B cell (primary cell): ENCODE measurements at regions of chr7 and their contacts with region 1.

Region 1: GRCh38 chr7:43582503-43583423 is at the start of gene STK17A:
- DNase-seq: peak; percentile 97
- ATAC-seq: peak; percentile 83
- H3K4me3 ChIP-seq: peak within 1 kb of the TSS; percentile 89 to 98 (median 91)
- H3K4me3 Mint-ChIP-seq: peak within 1 kb of the TSS; percentile 98
- H3K27ac ChIP-seq: peak within 1 kb of the TSS; percentile 86 to 94
- H3K27ac Mint-ChIP-seq: peak within 1 kb of the TSS; percentile 98
- H3K4me1 ChIP-seq: peaks cover 14 to 23% of the 10 kb centered on the region in 2 donors
- H3K4me1 Mint-ChIP-seq: peaks cover 35% of the 10 kb centered on the region
- H3K27me3 ChIP-seq: peaks cover 0 to 2% (median 0%) of the 10 kb centered on the region in 4 experiments
- H3K27me3 Mint-ChIP-seq: no peaks in the 10 kb centered on the region
- CTCF ChIP-seq: peak; percentile 96
- total RNA-seq, gene STK17A: 111 and 115 TPM in 2 replicates

Region 2: DNA sequence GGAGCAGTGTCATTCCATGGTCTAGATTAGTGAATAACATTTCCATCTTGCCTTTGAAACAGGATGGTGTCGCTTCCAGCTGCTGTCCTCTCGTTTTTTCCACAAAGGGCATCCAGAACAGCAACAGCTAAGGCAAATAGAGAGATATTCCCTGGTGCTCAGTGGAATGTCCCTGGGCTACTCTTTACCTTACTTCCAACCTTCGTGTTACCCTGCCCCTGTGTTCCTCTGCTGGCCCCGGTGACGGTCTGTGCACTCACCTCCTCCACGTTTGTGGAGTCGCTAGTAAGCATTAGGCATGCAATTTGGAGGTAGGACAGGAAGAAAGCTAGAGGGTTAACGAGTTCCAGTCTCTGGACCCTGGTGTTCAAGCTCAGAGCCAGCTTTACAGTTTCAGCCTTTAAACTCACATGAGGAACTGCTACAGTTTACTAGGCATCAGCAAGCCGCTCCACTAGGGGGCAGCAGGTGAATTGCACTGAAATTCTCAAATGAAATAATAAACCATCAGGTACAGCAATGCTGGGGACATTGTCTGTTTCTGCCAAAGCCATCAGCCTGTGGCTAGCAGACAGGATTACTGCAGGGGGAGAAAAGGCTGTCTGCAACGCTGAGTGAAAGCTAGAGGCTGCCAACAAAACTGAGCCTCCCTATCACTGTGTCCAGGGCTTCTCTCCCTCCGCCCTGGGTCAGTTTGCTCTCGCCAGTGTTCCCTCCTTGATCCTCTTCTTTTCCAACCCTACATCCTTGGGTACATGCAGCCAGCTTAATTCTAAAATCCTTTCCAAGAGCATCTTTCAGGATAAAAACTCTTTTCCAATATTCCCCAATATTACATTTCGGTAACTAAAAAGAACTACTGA is 641.5 kb before region 1 on chr7:
- CTCF ChIA-PET with region 1: interaction called, 10 read pairs
- POLR2A ChIA-PET with region 1: no interaction called
- intact Hi-C with region 1: loop called (anchors 1 kb)
- DNase-seq: peak; percentile 74
- ATAC-seq: peak; percentile 53
- H3K4me3 ChIP-seq: no peak overlapping the region
- H3K4me3 Mint-ChIP-seq: no peak overlapping the region
- H3K27ac ChIP-seq: no peak overlapping the region
- H3K27ac Mint-ChIP-seq: no peak overlapping the region
- H3K4me1 ChIP-seq: no peaks in the 10 kb centered on the region
- H3K4me1 Mint-ChIP-seq: peaks cover 6% of the 10 kb centered on the region
- H3K27me3 ChIP-seq: no peaks in the 10 kb centered on the region
- H3K27me3 Mint-ChIP-seq: no peaks in the 10 kb centered on the region
- CTCF ChIP-seq: peak; percentile 91

Region 3: GRCh38 chr7:43362652-43363034 is 220.1 kb before region 1 on chr7:
- CTCF ChIA-PET with region 1: no interaction called
- POLR2A ChIA-PET with region 1: no interaction called
- intact Hi-C with region 1: no loop called
- DNase-seq: no peak
- ATAC-seq: no peak
- H3K4me3 ChIP-seq: no peak overlapping the region
- H3K4me3 Mint-ChIP-seq: no peak overlapping the region
- H3K27ac ChIP-seq: no peak overlapping the region
- H3K27ac Mint-ChIP-seq: no peak overlapping the region
- H3K4me1 ChIP-seq: no peaks in the 10 kb centered on the region
- H3K4me1 Mint-ChIP-seq: no peaks in the 10 kb centered on the region
- H3K27me3 ChIP-seq: peaks cover 0 to 3% (median 2%) of the 10 kb centered on the region in 4 experiments
- H3K27me3 Mint-ChIP-seq: peaks cover 8% of the 10 kb centered on the region
- CTCF ChIP-seq: no peak

Region 4: DNA sequence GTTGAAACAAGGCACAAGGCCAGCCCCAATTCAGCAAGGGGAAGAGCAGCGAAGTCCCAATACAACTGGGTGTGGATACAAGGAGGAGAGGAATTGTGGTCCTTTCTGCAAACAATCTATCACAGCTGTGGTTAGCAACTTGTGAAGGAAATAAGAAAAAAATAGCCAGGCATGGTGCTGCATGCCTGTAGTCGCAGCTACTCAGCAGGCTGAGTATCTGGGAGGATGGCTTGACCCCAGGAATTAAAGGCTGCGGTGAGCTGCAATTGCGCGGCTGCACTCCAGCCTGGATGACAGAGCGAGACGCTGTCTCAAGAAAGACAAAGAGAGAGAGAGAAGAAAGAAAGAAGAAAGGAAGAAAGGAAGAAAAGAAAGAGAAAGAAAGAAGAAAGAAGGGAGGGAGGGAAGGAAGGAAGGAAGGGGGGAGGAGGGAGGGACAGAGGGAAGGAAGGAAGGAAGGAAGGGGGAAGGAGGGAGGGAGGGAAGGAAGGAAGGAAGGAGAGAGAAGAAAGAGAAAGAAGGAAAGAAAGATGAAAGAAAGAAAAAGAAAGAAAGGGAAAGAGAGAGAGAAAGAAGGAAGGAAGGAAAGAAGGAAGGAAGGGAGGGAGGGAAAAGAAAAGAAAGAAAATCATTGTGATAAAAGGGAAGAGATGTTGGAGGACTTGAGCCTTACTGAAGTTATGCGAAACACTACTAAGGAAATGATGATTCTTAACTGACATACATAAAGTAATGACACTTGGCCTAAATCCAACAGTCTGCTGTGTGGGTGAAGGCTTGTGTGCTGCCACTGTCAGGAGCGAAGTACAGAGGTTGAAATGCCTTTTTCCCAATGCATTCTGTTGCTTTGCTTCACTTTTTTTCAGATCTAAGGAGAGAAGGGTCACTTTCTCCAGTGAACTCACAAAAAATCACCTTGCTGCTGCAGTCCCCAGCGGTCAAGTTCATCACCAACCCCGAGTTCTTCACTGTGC is 116.9 kb before region 1 on chr7:
- CTCF ChIA-PET with region 1: no interaction called
- POLR2A ChIA-PET with region 1: no interaction called
- intact Hi-C with region 1: no loop called
- DNase-seq: no peak
- ATAC-seq: no peak
- H3K4me3 ChIP-seq: no peak overlapping the region
- H3K4me3 Mint-ChIP-seq: no peak overlapping the region
- H3K27ac ChIP-seq: no peak overlapping the region
- H3K27ac Mint-ChIP-seq: no peak overlapping the region
- H3K4me1 ChIP-seq: no peaks in the 10 kb centered on the region
- H3K4me1 Mint-ChIP-seq: no peaks in the 10 kb centered on the region
- H3K27me3 ChIP-seq: peaks cover 0 to 6% (median 0%) of the 10 kb centered on the region in 4 experiments
- H3K27me3 Mint-ChIP-seq: peaks cover 32% of the 10 kb centered on the region
- CTCF ChIP-seq: no peak

Region 5: DNA sequence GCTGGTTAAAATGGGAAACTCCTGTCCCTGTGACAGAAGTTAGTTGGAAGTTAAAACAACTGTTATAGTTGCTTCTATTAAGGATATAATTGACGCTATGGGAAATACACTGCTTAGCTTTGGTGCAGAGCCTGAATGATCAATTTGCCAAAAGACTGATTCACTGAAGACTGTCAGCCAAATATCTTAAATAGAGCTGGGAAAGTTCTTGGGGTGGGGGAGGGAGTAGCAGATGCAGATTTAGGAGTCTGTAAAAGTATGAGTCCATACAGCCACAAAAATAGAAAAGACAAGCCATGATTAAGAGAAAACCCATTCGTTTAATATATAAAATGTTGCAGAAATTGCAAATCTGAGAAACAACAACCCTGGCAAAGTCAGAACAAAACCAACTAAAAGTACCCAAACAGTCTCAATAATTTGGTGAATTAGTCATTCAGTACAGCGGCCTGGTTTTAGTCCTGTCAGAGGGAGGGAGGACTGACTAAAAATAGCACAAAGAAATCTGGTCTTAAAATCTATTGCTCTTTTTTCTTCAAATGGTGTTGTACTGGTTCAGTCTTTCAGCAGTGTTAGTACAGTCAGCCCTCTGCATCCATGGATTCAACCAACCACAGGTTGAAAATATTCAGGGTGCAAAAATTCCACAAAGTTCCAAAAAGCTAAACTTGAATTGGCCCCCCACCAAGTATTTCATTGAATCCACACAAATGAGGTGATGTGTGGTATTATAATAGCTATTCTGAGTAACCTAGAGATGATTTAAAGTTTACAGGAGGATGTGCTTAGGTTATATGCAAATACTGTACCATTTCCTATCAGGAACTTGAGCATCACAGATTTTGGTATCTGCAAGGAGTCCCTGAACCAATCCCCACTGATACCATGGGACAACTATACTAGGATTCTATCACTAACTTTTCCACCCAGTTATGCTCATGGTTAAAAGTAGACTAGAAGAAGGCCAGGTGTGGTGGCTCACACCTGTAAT is 30.1 kb after region 1 on chr7:
- CTCF ChIA-PET with region 1: interaction called, 27 read pairs
- POLR2A ChIA-PET with region 1: interaction called, 7 read pairs
- intact Hi-C with region 1: no loop called
- DNase-seq: no peak
- ATAC-seq: no peak
- H3K4me3 ChIP-seq: peak overlapping the region in 1 of 5 experiments; percentile 2
- H3K4me3 Mint-ChIP-seq: peak overlapping the region; percentile 38
- H3K27ac ChIP-seq: peak overlapping the region in 1 of 2 donors; percentile 75
- H3K27ac Mint-ChIP-seq: peak overlapping the region; percentile 57
- H3K4me1 ChIP-seq: peaks cover 45 to 51% of the 10 kb centered on the region in 2 donors
- H3K4me1 Mint-ChIP-seq: peaks cover 50% of the 10 kb centered on the region
- H3K27me3 ChIP-seq: no peaks in the 10 kb centered on the region
- H3K27me3 Mint-ChIP-seq: no peaks in the 10 kb centered on the region
- CTCF ChIP-seq: no peak

Region 6: GRCh38 chr7:43639858-43640491 is 57.2 kb after region 1 on chr7:
- CTCF ChIA-PET with region 1: interaction called, 203 read pairs
- POLR2A ChIA-PET with region 1: interaction called, 4 read pairs
- intact Hi-C with region 1: no loop called
- DNase-seq: no peak
- ATAC-seq: no peak
- H3K4me3 ChIP-seq: no peak overlapping the region
- H3K4me3 Mint-ChIP-seq: no peak overlapping the region
- H3K27ac ChIP-seq: peak overlapping the region; percentile 30 to 97
- H3K27ac Mint-ChIP-seq: peak overlapping the region; percentile 8
- H3K4me1 ChIP-seq: peaks cover 42 to 46% of the 10 kb centered on the region in 2 donors
- H3K4me1 Mint-ChIP-seq: peaks cover 70% of the 10 kb centered on the region
- H3K27me3 ChIP-seq: no peaks in the 10 kb centered on the region
- H3K27me3 Mint-ChIP-seq: no peaks in the 10 kb centered on the region
- CTCF ChIP-seq: no peak

Region 7: GRCh38 chr7:43693687-43694398 is 111.1 kb after region 1 on chr7:
- CTCF ChIA-PET with region 1: interaction called, 721 read pairs
- POLR2A ChIA-PET with region 1: interaction called, 62 read pairs
- intact Hi-C with region 1: no loop called
- DNase-seq: no peak
- ATAC-seq: no peak
- H3K4me3 ChIP-seq: no peak overlapping the region
- H3K4me3 Mint-ChIP-seq: no peak overlapping the region
- H3K27ac ChIP-seq: no peak overlapping the region
- H3K27ac Mint-ChIP-seq: no peak overlapping the region
- H3K4me1 ChIP-seq: peaks cover 34 to 50% of the 10 kb centered on the region in 2 donors
- H3K4me1 Mint-ChIP-seq: peaks cover 45% of the 10 kb centered on the region
- H3K27me3 ChIP-seq: no peaks in the 10 kb centered on the region
- H3K27me3 Mint-ChIP-seq: no peaks in the 10 kb centered on the region
- CTCF ChIP-seq: no peak

Region 8: GRCh38 chr7:43729214-43729923 is 146.6 kb after region 1 on chr7 and contains the start of gene COA1:
- CTCF ChIA-PET with region 1: interaction called, 38 read pairs
- POLR2A ChIA-PET with region 1: no interaction called
- intact Hi-C with region 1: loop called (anchors 2 kb)
- DNase-seq: peak; percentile 92
- ATAC-seq: peak; percentile 95
- H3K4me3 ChIP-seq: peak within 1 kb of the TSS; percentile 73 to 88 (median 84)
- H3K4me3 Mint-ChIP-seq: peak within 1 kb of the TSS; percentile 93
- H3K27ac ChIP-seq: peak within 1 kb of the TSS; percentile 40 to 71
- H3K27ac Mint-ChIP-seq: peak within 1 kb of the TSS; percentile 87
- H3K4me1 ChIP-seq: peaks cover 12 to 13% of the 10 kb centered on the region in 2 donors
- H3K4me1 Mint-ChIP-seq: peaks cover 36% of the 10 kb centered on the region
- H3K27me3 ChIP-seq: no peaks in the 10 kb centered on the region
- H3K27me3 Mint-ChIP-seq: no peaks in the 10 kb centered on the region
- CTCF ChIP-seq: peak; percentile 22
- total RNA-seq, gene COA1: 72.7 and 89.7 TPM in 2 replicates

Region 9: DNA sequence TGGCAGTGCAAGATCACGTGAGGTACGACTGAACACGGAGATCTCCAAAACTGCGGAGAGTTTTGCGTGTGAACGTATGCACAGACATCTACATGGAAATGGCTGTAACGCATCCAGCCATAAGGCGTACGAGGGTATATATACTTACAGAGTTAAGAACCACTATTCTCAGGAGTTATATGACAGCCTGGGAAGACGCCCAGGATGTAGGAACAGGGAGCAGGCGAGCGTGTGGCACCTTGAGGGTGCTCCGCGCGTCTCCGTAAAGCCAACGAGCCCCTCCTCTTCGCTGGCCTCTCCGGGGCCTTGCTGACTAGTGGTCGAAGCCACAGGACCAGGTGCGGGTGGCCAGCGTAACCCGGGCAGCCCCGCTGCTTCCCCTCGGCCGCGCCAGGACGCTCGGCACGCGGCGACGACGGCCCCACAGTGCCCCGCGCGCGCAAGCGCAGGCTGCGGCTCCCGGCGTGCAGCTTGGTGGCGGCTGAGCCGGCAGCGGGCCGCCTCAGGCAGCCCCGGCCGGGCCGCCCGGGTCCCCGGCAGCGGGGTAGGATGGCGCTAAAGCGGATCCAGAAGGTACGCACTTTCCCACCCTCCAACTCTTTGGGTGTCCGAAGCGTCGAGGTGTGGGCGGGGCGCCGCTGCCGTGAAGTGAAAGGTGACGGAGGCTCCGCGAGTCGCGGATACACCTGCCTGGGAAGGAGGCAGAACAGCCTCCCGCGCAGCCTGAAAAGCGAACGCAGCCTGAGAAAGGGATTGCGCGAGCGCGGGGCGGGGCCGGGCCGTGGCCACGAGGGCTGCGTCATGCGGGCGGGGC is 343.4 kb after region 1 on chr7 and contains the start of gene UBE2D4:
- CTCF ChIA-PET with region 1: interaction called, 4 read pairs
- POLR2A ChIA-PET with region 1: no interaction called
- intact Hi-C with region 1: loop called (anchors 5 kb)
- DNase-seq: peak; percentile 93
- ATAC-seq: peak; percentile 87
- H3K4me3 ChIP-seq: peak within 1 kb of the TSS; percentile 53 to 85 (median 72)
- H3K4me3 Mint-ChIP-seq: peak within 1 kb of the TSS; percentile 95
- H3K27ac ChIP-seq: peak within 1 kb of the TSS; percentile 87 to 94
- H3K27ac Mint-ChIP-seq: peak within 1 kb of the TSS; percentile 96
- H3K4me1 ChIP-seq: peaks cover 8 to 21% of the 10 kb centered on the region in 2 donors
- H3K4me1 Mint-ChIP-seq: peaks cover 18% of the 10 kb centered on the region
- H3K27me3 ChIP-seq: no peaks in the 10 kb centered on the region
- H3K27me3 Mint-ChIP-seq: no peaks in the 10 kb centered on the region
- CTCF ChIP-seq: no peak
- total RNA-seq, gene UBE2D4: 9.4 and 11.4 TPM in 2 replicates